ENCODE measurements at regions of chr5 and their contacts with region 1.

Region 1: GRCh38 chr5:170293273-170293672 is 4.3 kb downstream of the LCP2 start:
- DNase-seq: peak; percentile 86
- H3K4me3 Mint-ChIP-seq: peak overlapping the region; percentile 97
- H3K27ac Mint-ChIP-seq: peak overlapping the region; percentile 78
- H3K4me1 Mint-ChIP-seq: peaks cover 76% of the 10 kb centered on the region
- H3K27me3 Mint-ChIP-seq: no peaks in the 10 kb centered on the region

Region 2: DNA sequence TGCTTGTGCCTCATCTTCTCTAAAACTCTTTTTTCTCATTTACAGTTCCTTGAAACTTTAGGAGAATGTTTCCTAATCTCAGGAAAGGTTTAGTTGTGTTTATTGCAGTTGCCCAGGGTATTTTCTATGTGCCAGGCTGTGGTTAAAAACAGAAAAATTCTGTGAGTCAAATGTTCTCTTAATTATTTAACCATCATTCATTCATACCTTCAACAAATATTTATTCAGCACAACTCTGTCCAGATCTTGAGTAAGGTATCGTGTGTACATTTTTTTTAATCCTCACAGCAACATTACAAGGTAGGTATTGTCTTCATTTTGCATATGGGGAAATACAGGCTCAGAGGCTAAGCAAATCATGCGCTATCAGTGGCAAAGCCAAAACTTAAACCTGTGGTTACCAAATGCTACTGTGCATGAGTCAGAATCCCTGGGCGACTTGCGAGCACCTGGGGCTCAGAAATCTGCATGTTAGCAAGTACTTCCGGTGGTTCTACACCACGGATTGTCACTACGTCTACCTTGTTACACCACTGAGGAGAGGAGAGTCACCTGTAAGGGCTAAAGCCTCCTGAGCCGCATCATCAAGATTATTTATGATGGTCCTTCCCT is 39.3 kb before region 1 on chr5:
- intact Hi-C with region 1: loop called (anchors 1 kb)
- DNase-seq: peak; percentile 88
- H3K4me3 Mint-ChIP-seq: peak overlapping the region; percentile 26
- H3K27ac Mint-ChIP-seq: peak overlapping the region; percentile 76
- H3K4me1 Mint-ChIP-seq: peaks cover 53% of the 10 kb centered on the region
- H3K27me3 Mint-ChIP-seq: no peaks in the 10 kb centered on the region

Region 3: DNA sequence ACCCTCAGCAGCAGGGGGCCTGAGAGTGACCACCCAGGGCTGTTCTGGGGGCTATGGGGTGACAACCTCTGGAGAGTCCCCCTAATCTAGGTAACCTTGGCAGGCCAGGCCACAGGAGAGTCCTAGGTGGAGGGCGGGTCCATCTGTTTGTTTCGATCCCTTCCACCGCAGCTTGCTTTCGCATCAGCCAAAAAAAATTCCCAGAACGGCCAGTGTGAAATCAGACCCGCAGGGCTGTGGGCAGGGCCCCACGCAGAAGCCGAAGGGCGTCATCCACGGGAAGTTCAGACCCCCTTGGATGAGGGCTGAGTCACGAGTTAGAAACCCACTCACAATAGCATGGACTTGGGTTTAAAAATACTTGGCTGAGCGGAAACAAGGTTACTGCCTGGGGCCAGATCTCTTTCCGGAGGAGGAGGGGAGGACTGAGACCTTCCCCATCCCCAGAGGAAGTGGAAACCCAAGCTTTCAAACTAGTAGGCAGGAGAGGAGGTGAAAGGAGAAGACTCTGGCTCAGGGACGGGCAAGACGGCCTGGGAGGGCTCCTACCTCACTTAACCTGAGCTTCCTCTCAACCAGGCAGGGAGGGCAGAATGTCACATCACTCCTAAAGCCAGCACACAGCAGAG is 1886.2 kb after region 1 on chr5:
- intact Hi-C with region 1: loop called (anchors 10 kb)
- DNase-seq: peak; percentile 88
- H3K4me3 Mint-ChIP-seq: peak overlapping the region; percentile 90
- H3K27ac Mint-ChIP-seq: peak overlapping the region; percentile 96
- H3K4me1 Mint-ChIP-seq: peaks cover 78% of the 10 kb centered on the region
- H3K27me3 Mint-ChIP-seq: no peaks in the 10 kb centered on the region